ENCODE measurements at regions of chr11 and their contacts with region 1.

Region 1: GRCh38 chr11:925496-926321 is at the start of gene AP2A2:
- DNase-seq: peak; percentile 96
- ATAC-seq: peak; percentile 65
- H3K4me3 Mint-ChIP-seq: peak within 1 kb of the TSS; percentile 80
- H3K27ac Mint-ChIP-seq: peak within 1 kb of the TSS; percentile 86
- H3K4me1 Mint-ChIP-seq: peaks cover 33% of the 10 kb centered on the region
- H3K27me3 Mint-ChIP-seq: no peaks in the 10 kb centered on the region
- total RNA-seq, gene AP2A2: 43.5 to 71.6 TPM

Region 2: GRCh38 chr11:910589-911195 is 15.0 kb before region 1 on chr11 and contains the start of gene CHID1:
- CTCF ChIA-PET with region 1: interaction called, 11 read pairs
- POLR2A ChIA-PET with region 1: interaction called, 5 read pairs
- intact Hi-C with region 1: loop called in 1 of 2 experiments (anchors 1 kb)
- DNase-seq: peak; percentile 92
- ATAC-seq: peak; percentile 98
- H3K4me3 Mint-ChIP-seq: peak within 1 kb of the TSS; percentile 88
- H3K27ac Mint-ChIP-seq: peak within 1 kb of the TSS; percentile 88
- H3K4me1 Mint-ChIP-seq: peaks cover 24% of the 10 kb centered on the region
- H3K27me3 Mint-ChIP-seq: no peaks in the 10 kb centered on the region
- total RNA-seq, gene CHID1: 60.4 to 75.3 TPM

Region 3: DNA sequence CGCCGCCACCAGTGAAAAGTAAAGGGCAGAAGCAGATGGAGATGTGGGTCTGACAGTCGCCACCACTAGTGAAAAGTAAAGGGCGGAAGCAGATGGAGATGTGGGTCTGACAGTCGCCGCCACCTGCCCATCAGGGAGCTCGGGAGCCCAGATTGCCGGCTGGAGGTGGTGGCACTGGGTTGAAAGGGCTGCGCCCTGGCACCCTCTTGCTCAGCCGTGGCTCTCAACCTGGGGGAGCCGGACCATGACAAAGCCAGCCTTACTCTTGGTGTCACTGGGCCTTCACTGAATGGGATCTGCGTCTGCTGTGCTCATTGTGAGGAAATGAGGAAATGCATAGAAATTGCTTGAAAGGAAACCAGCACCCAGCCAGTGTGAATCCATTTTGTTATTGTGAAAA is 36.2 kb after region 1 on chr11:
- CTCF ChIA-PET with region 1: no interaction called
- POLR2A ChIA-PET with region 1: no interaction called
- intact Hi-C with region 1: loop called in 1 of 2 experiments (anchors 5 kb)
- DNase-seq: no peak
- ATAC-seq: no peak
- H3K4me3 Mint-ChIP-seq: no peak overlapping the region
- H3K27ac Mint-ChIP-seq: peak overlapping the region; percentile 37
- H3K4me1 Mint-ChIP-seq: no peaks in the 10 kb centered on the region
- H3K27me3 Mint-ChIP-seq: no peaks in the 10 kb centered on the region

Region 4: DNA sequence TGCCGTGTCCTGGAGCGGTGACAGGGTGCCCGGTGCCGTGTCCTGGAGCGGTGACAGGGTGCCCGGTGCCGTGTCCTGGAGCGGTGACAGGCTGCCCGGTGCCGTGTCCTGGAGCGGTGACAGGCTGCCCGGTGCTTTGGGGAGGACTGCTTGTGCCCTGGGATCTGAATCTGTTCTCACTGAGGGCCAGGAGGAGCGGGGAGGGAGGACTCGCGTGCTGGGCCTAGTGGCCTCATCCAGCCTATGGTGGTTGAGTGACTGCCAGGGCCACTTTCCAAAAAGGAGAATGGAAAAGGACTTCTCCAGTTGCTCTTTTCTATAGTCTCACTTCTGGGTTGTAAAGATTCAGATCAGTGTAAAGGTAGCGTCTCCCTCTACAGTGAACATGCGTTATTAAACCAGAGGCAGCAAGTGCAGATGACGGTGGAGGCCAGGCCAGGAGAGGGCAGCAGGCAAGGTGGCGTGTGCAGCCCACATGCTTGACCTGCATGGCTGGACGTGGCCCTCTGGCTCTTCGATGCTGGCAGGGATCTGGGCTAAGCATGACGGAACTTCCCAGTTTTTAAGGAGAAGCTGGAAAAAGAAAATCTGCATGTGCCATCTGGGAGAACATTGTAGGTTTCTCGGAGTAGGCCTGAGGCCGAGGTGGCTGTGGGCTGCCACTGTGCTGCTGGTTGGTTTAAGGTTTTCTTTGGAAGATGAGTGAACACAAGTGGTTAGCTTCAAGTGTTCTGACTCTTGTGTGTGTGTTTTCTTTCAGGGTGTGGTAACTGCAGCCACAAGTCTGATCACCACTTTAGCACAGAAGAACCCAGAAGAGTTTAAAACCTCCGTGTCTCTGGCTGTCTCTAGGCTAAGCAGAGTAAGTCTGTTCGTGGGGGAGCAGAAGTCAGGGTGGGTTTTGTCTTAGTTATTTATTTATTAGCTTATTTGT is 55.0 kb after region 1 on chr11:
- CTCF ChIA-PET with region 1: no interaction called
- POLR2A ChIA-PET with region 1: no interaction called
- intact Hi-C with region 1: loop called in 1 of 2 experiments (anchors 5 kb)
- DNase-seq: no peak
- ATAC-seq: no peak
- H3K4me3 Mint-ChIP-seq: no peak overlapping the region
- H3K27ac Mint-ChIP-seq: peak overlapping the region; percentile 4
- H3K4me1 Mint-ChIP-seq: peaks cover 4% of the 10 kb centered on the region
- H3K27me3 Mint-ChIP-seq: no peaks in the 10 kb centered on the region

Region 5: GRCh38 chr11:1050581-1051355 is 125.1 kb after region 1 on chr11:
- CTCF ChIA-PET with region 1: no interaction called
- POLR2A ChIA-PET with region 1: no interaction called
- intact Hi-C with region 1: loop called in 1 of 2 experiments (anchors 1 kb)
- DNase-seq: peak; percentile 79
- ATAC-seq: peak; percentile 96
- H3K4me3 Mint-ChIP-seq: no peak overlapping the region
- H3K27ac Mint-ChIP-seq: no peak overlapping the region
- H3K4me1 Mint-ChIP-seq: no peaks in the 10 kb centered on the region
- H3K27me3 Mint-ChIP-seq: peaks cover 4% of the 10 kb centered on the region

Region 6: DNA sequence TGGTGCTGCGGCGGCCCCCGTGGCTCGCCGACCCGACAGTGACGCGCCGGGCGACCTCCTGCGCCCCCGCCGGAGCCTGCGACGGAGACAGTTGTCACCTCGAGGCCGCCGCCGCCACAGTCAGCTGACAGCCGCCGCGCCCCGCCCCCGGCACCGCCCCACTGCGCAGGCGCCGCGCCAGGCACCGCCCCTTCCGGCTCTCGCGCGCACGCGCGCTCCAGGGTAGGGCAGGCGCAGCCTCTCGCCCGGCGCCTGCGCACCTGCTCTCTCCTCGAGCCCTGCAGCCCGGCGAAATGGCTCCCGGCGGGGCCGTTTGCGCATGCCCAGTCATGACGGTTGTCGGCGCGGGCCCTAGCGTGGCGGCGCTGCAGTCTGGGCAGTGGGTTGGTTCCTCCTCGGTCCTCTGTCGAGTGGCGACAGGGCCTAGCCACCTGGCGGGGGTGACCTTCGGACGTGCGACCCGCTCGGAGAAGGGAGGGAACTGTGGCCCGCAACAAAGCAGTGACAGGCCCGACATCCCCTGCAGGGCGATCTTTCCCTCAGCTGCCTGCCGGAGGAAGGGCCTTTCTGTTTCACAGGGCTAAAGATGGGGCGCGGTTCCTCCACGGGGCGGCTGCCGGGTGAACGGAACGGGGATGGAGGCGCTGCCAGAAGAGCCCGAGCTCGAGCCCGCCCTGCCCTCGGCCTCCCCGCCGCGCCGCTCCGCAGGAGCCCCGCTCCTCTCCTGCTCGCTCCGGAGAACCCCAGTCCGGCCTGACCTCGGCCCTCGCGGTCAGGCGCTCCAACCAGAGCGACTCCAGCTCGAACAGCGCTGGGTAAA is 384.0 kb after region 1 on chr11 and contains the start of gene TOLLIP:
- CTCF ChIA-PET with region 1: no interaction called
- POLR2A ChIA-PET with region 1: no interaction called
- intact Hi-C with region 1: loop called in 1 of 2 experiments (anchors 1 kb)
- DNase-seq: peak; percentile 98
- ATAC-seq: peak; percentile 92
- H3K4me3 Mint-ChIP-seq: peak within 1 kb of the TSS; percentile 76
- H3K27ac Mint-ChIP-seq: peak within 1 kb of the TSS; percentile 92
- H3K4me1 Mint-ChIP-seq: peaks cover 40% of the 10 kb centered on the region
- H3K27me3 Mint-ChIP-seq: no peaks in the 10 kb centered on the region
- total RNA-seq, gene TOLLIP: 29.6 to 45.8 TPM

Region 7: DNA sequence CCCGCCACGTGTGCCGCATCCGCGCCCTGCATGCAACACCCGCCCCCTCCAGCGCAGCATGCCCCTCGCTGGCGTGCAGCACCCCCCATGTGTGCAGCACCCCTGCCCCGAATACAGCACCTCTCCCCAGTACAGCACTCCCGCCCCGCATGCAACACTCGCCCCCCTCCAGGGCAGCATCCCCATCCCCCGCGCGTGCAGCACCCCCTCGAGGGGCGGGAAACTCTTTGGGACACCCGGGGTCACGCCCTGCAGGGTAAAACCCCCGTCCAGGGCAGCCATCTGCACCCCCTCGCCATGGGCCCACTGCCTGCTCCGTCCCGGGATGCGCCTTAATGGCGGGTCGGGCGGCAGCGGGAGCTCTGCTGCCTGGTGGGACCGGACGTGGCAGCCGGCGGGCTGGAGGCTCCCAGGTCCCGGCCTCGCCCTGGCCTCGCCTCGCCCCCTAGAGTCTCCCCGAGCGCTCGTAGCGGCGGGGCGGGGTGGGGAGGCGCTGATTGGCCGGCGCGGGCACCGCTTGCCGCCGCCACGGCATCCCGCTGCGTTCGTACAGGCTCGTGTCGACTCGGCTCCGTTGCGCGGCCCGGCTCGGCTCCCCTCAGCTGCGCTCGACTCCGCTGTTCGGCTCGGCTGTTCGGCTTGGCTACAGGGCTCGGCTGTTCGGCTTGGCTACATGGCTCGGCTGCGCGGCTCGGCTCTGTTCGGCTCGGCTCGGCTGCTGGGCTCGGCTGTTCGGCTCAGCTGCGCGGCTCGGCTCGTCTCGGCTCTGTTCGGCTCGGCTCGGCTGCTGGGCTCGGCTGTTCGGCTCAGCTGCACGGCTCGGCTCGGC is 463.6 kb after region 1 on chr11:
- CTCF ChIA-PET with region 1: no interaction called
- POLR2A ChIA-PET with region 1: no interaction called
- intact Hi-C with region 1: loop called in 1 of 2 experiments (anchors 2 kb)
- DNase-seq: peak; percentile 99
- ATAC-seq: peak; percentile 99
- H3K4me3 Mint-ChIP-seq: peak overlapping the region; percentile 53
- H3K27ac Mint-ChIP-seq: no peak overlapping the region
- H3K4me1 Mint-ChIP-seq: peaks cover 9% of the 10 kb centered on the region
- H3K27me3 Mint-ChIP-seq: peaks cover 25% of the 10 kb centered on the region